Activated CD4-positive, alpha-beta T cell treated with anti-CD3 and anti-CD28 coated beads, Interleukin-2, amount 10 ng/mL, durations not matched to agents 24 days and 14 days (primary cell): ENCODE measurements at regions of chr4 and their contacts with region 1.

Region 1: GRCh38 chr4:153466081-153466948 is at the start of gene TMEM131L:
- DNase-seq: peak; percentile 90
- H3K4me3 Mint-ChIP-seq: peak within 1 kb of the TSS; percentile 85
- H3K27ac Mint-ChIP-seq: peak within 1 kb of the TSS; percentile 93
- H3K4me1 Mint-ChIP-seq: peaks cover 47% of the 10 kb centered on the region
- H3K27me3 Mint-ChIP-seq: no peaks in the 10 kb centered on the region
- total RNA-seq, gene TMEM131L: 40.3 and 40.6 TPM in 2 replicates

Region 2: DNA sequence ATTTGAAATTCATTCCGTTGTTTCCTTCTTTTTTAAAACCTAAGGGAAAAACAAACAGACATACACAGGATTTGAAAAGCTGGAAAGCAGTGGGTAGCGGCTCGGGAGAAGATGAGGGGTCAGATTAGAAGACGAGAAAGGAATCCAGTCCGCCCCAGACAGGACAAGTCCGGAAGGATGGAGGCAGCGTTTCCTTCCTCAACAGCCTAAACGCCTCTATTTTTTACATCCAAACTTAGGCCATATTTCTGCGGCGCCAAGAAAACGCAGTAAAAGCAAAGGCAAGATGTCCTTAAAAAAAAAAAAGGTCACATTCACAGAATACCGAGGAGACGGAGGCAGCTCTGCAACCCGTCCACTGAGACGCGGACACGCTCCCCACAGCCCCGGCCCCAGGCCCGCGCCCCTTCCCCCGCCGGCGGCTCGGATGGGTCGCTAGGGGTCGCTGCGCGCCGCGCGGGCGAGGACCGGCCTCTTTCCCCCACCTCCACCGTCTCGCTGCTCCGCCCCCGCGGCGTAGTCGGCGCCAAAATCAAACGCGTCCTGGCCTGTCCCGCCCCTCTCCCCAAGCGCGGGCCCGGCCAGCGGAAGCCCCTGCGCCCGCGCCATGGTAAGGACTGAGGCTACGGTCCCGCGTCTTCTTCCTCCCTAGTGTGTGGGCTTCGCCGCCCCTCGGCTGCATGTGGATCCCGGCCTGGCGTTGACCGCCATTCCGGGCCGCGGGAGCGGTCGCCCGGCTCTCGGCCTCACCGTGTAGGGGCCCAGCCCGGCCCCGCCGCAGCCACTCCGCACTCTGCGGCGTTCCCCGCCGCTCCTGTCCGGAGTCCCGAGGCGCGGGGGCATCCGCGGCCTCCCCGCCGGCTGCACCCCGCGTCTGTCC is 121.9 kb before region 1 on chr4 and contains the start of gene MND1:
- intact Hi-C with region 1: loop called (anchors 1 kb)
- DNase-seq: peak; percentile 98
- H3K4me3 Mint-ChIP-seq: peak within 1 kb of the TSS; percentile 93
- H3K27ac Mint-ChIP-seq: peak within 1 kb of the TSS; percentile 90
- H3K4me1 Mint-ChIP-seq: peaks cover 46% of the 10 kb centered on the region
- H3K27me3 Mint-ChIP-seq: peaks cover 10% of the 10 kb centered on the region
- total RNA-seq, gene MND1: 15.0 and 18.8 TPM in 2 replicates

Region 3: GRCh38 chr4:153438916-153439756 is 27.2 kb before region 1 on chr4:
- intact Hi-C with region 1: loop called (anchors 2 kb)
- DNase-seq: peak; percentile 76
- H3K4me3 Mint-ChIP-seq: peak overlapping the region; percentile 80
- H3K27ac Mint-ChIP-seq: peak overlapping the region; percentile 75
- H3K4me1 Mint-ChIP-seq: peaks cover 27% of the 10 kb centered on the region
- H3K27me3 Mint-ChIP-seq: peaks cover 3% of the 10 kb centered on the region

Region 4: GRCh38 chr4:153497988-153498967 is 32.0 kb after region 1 on chr4:
- intact Hi-C with region 1: loop called (anchors 1 kb)
- DNase-seq: peak; percentile 61
- H3K4me3 Mint-ChIP-seq: peak overlapping the region; percentile 80
- H3K27ac Mint-ChIP-seq: peak overlapping the region; percentile 94
- H3K4me1 Mint-ChIP-seq: peaks cover 76% of the 10 kb centered on the region
- H3K27me3 Mint-ChIP-seq: no peaks in the 10 kb centered on the region

Region 5: DNA sequence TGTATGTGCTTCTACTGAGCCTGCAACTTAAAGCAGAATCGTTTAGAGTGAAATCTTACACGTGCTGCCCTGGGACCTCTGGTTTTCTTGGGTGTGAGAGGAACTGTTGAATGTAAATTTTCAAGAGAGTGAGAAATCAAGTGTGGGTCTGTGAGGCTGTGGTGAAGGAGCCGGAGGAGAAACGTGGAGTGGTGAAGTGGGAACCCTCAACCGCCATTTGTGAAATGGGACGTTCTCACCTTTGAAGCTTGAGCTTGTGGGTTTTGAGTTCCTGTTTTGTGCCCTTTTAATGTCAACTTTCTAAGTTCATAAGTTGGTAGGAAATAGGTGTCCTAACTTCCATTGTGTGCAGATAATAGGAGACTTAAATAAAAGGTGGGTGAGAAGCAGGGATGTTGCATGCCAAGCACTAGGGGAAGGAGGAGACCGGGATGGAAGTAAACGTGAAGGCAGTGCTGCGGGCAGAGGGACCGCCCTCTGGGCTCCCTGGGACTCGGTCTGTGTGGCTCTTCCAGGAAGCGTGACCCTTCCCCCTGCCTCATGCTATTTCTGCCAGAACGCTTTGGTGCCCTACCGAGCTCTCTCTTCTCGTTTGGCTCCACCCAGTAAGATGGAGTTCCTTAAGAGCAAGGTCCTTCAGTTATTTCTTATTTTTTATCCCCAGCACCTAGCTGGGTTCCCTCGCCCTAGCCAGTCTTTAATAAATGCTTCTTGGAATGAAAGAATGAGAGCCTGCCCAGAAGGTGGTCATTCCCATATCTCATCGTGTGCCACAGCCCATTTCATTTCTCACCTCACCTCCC is 55.9 kb after region 1 on chr4:
- intact Hi-C with region 1: loop called (anchors 1 kb)
- DNase-seq: peak; percentile 87
- H3K4me3 Mint-ChIP-seq: peak overlapping the region; percentile 75
- H3K27ac Mint-ChIP-seq: peak overlapping the region; percentile 95
- H3K4me1 Mint-ChIP-seq: peaks cover 83% of the 10 kb centered on the region
- H3K27me3 Mint-ChIP-seq: no peaks in the 10 kb centered on the region

Region 6: GRCh38 chr4:153528705-153529485 is 62.6 kb after region 1 on chr4:
- intact Hi-C with region 1: loop called (anchors 1 kb)
- DNase-seq: peak; percentile 68
- H3K4me3 Mint-ChIP-seq: peak overlapping the region; percentile 80
- H3K27ac Mint-ChIP-seq: peak overlapping the region; percentile 95
- H3K4me1 Mint-ChIP-seq: peaks cover 72% of the 10 kb centered on the region
- H3K27me3 Mint-ChIP-seq: no peaks in the 10 kb centered on the region

Region 7: DNA sequence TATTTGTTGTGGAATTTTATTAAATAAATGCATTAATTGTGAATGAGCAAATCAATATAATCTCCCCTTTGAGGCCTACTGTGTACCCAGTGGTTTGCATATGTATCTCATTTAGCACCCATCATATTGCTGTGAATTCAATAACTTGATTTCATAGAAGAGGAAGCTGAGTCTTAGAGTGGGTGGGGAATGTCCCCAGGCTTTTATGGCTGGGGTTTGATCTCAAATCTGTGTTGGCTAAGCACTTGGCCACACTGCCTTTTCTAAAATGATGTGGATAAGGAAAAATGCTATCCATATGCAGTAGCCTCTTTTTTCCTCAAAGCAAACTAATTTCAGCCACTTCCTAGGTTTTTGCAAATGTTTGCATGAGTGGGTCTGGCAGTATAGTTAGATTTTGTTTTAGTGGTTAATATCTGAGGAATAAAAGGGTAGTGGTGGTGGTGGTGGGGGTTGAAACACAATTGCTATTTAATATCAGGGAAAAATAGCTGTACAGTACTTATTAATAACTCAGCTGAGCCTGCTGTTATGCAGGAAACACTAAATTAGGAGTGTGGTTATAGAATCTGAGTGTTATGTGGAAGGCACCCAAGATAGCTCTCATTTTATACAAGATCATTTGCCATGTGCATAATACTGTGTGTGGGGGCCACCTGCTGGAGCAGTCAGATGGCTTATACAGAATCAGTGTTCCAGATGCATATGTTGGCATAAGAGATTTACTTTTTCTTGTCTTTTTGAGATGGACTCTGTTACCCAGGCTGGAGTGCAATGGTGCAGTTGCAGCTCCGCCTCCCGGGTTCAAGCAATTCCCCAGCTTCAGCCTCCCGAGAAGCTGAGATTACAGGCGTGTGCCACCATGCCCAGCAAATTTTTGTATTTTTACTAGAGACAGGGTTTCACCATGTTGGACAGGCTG is 107.8 kb after region 1 on chr4:
- intact Hi-C with region 1: loop called (anchors 1 kb)
- DNase-seq: peak; percentile 89
- H3K4me3 Mint-ChIP-seq: no peak overlapping the region
- H3K27ac Mint-ChIP-seq: peak overlapping the region; percentile 52
- H3K4me1 Mint-ChIP-seq: peaks cover 49% of the 10 kb centered on the region
- H3K27me3 Mint-ChIP-seq: no peaks in the 10 kb centered on the region